ENCODE measurements at regions of chr3 and their contacts with region 1.

Region 1: GRCh38 chr3:25856902-25857518 is 67.1 kb downstream of the OXSM start:
- DNase-seq: peak in 5 of 14 experiments; percentile 3 to 65 (median 57)
- ATAC-seq: peak; percentile 85
- H3K4me3 ChIP-seq: no peak overlapping the region
- H3K4me3 Mint-ChIP-seq: no peak overlapping the region
- H3K27ac ChIP-seq: no peak overlapping the region
- H3K27ac Mint-ChIP-seq: no peak overlapping the region
- H3K4me1 ChIP-seq: no peaks in the 10 kb centered on the region
- H3K4me1 Mint-ChIP-seq: peaks cover 3% of the 10 kb centered on the region
- H3K27me3 ChIP-seq: no peaks in the 10 kb centered on the region
- H3K27me3 Mint-ChIP-seq: no peaks in the 10 kb centered on the region
- CTCF ChIP-seq: peak; percentile 79

Region 2: GRCh38 chr3:25782938-25783660 is 73.9 kb before region 1 on chr3 and contains the start of gene NGLY1:
- CTCF ChIA-PET with region 1: interaction called, 3 read pairs
- POLR2A ChIA-PET with region 1: interaction called, 4 read pairs
- intact Hi-C with region 1: loop called in 1 of 2 experiments (anchors 2 kb)
- DNase-seq: peak; percentile 71 to 93 (median 82)
- ATAC-seq: peak; percentile 89
- H3K4me3 ChIP-seq: peak within 1 kb of the TSS; percentile 82
- H3K4me3 Mint-ChIP-seq: peak within 1 kb of the TSS; percentile 96
- H3K27ac ChIP-seq: peak within 1 kb of the TSS; percentile 72 to 79
- H3K27ac Mint-ChIP-seq: peak within 1 kb of the TSS; percentile 96
- H3K4me1 ChIP-seq: peaks cover 26% of the 10 kb centered on the region
- H3K4me1 Mint-ChIP-seq: peaks cover 64% of the 10 kb centered on the region
- H3K27me3 ChIP-seq: no peaks in the 10 kb centered on the region
- H3K27me3 Mint-ChIP-seq: no peaks in the 10 kb centered on the region
- CTCF ChIP-seq: no peak
- total RNA-seq, gene NGLY1: 46.0 to 46.2 TPM

Measured in CD4-positive, alpha-beta T cell (primary cell).